HAP-1 (cell line): ENCODE measurements at regions of chr3 and their contacts with region 1.

Region 1: DNA sequence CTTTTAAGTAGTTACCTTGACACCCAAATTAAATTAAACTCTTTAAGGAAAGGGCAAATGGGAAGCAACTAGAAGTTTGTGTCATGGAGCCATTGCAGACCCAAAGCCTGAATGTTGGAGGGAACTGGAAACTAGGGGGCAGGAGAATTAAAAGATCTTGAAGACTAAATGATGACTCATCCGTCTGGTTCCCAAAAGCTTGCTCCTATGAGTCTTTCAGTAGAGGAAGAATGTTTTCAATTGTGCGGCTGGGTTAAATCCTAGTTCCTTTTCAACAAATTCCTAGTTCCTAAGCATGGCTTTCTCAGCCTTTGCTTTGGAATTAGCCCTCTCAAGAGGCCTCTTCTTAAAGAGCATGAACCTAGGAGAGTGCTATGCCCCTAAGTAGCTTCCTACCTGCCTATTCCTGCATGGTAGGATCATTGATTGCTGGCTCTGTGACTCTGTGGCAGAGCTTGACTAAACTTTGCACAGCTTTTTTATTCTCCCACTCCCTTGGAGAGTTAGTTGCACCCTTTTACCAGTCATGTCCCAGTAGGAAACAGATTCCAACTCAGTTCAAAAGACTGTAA is 17.7 kb downstream of the CLEC3B start:
- DNase-seq: no peak
- H3K4me3 ChIP-seq: no peak overlapping the region
- H3K4me1 ChIP-seq: no peaks in the 10 kb centered on the region; the same call in 1 of the 2 replicates
- H3K27me3 ChIP-seq: no peaks in the 10 kb centered on the region

Region 2: GRCh38 chr3:45205126-45205525 is 161.3 kb after region 1 on chr3:
- in situ Hi-C with region 1: loop called (anchors 5 kb)
- DNase-seq: no peak
- H3K4me3 ChIP-seq: no peak overlapping the region
- H3K4me1 ChIP-seq: peaks cover 12% of the 10 kb centered on the region
- H3K27me3 ChIP-seq: no peaks in the 10 kb centered on the region